WTC11 (cell line): ENCODE measurements at regions of chr13 and their contacts with region 1.

Region 1: DNA sequence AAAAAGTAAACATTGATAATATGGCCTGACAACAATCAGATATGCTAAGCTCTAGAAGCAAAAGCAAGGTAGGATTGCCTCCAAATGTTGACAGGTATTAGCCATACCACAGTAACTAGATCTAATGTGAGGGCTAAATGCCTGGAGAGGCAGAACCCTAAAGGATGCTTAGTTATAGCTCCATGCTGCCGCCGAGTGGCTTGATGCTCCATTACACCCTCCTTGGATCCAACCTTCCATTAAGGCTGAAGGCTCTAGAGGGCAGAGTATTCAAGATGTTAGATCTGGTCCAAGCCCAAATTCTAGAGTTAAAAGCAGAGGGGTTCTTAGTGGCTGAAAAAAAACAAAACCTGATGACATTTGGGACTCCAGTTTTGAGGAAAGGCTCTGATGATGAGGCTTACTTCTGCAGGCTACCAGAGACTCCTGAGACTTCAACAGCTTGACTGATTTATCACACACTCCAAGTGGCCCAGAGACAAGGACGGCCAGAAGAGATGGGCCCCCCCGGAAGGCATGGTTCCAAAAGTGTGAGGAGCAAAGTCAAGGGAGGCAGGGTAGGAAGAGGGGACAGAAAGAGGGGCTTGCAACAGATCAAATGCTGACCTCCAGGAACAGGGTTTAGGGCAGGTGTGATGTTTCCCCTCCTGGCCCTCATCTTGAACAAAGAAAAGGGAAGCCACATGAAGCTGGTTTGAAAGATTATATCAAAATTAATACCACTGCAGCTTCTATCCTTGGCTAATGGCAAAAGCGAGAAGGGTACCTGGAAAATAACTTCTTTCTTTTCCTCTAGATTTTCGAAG is 21.9 kb upstream of the CPB2 start:
- DNase-seq: peak; percentile 83
- ATAC-seq: peak; percentile 98
- H3K4me3 Mint-ChIP-seq: no peak overlapping the region
- H3K27ac Mint-ChIP-seq: peak overlapping the region; percentile 32; the same call in 1 of the 2 replicates
- H3K4me1 Mint-ChIP-seq: 0 out of 2 replicates have a peak, but pooled peaks cover 1% of the 10 kb centered on the region
- H3K27me3 Mint-ChIP-seq: no peaks in the 10 kb centered on the region
- CTCF ChIP-seq: peak; percentile 61; the same call in 1 of the 2 replicates

Region 2: GRCh38 chr13:45807520-45808099 is 319.1 kb before region 1 on chr13:
- CTCF ChIA-PET with region 1: interaction called, 13 read pairs
- POLR2A ChIA-PET with region 1: no interaction called
- DNase-seq: peak; percentile 40
- ATAC-seq: peak; percentile 88
- H3K4me3 Mint-ChIP-seq: no peak overlapping the region
- H3K27ac Mint-ChIP-seq: no peak overlapping the region
- H3K4me1 Mint-ChIP-seq: no peaks in the 10 kb centered on the region
- H3K27me3 Mint-ChIP-seq: no peaks in the 10 kb centered on the region; the same call in 1 of the 2 replicates
- CTCF ChIP-seq: no peak

Region 3: GRCh38 chr13:46041419-46041839 is 85.3 kb before region 1 on chr13:
- CTCF ChIA-PET with region 1: no interaction called
- POLR2A ChIA-PET with region 1: no interaction called
- DNase-seq: no peak
- ATAC-seq: no peak
- H3K4me3 Mint-ChIP-seq: no peak overlapping the region
- H3K27ac Mint-ChIP-seq: no peak overlapping the region
- H3K4me1 Mint-ChIP-seq: no peaks in the 10 kb centered on the region
- H3K27me3 Mint-ChIP-seq: no peaks in the 10 kb centered on the region
- CTCF ChIP-seq: no peak

Region 4: GRCh38 chr13:46071590-46072249 is 55.0 kb before region 1 on chr13:
- CTCF ChIA-PET with region 1: interaction called, 11 read pairs
- POLR2A ChIA-PET with region 1: no interaction called
- DNase-seq: peak; percentile 15
- ATAC-seq: peak; percentile 96
- H3K4me3 Mint-ChIP-seq: no peak overlapping the region
- H3K27ac Mint-ChIP-seq: no peak overlapping the region
- H3K4me1 Mint-ChIP-seq: no peaks in the 10 kb centered on the region
- H3K27me3 Mint-ChIP-seq: no peaks in the 10 kb centered on the region
- CTCF ChIP-seq: no peak

Region 5: GRCh38 chr13:46143184-46143701 is 16.5 kb after region 1 on chr13:
- CTCF ChIA-PET with region 1: interaction called, 16 read pairs
- POLR2A ChIA-PET with region 1: interaction called, 3 read pairs
- DNase-seq: no peak
- ATAC-seq: no peak
- H3K4me3 Mint-ChIP-seq: no peak overlapping the region
- H3K27ac Mint-ChIP-seq: no peak overlapping the region
- H3K4me1 Mint-ChIP-seq: peaks cover 43% of the 10 kb centered on the region
- H3K27me3 Mint-ChIP-seq: peaks cover 15% of the 10 kb centered on the region
- CTCF ChIP-seq: no peak

Region 6: GRCh38 chr13:46181840-46182490 is 55.2 kb after region 1 on chr13 and contains the start of gene LCP1:
- CTCF ChIA-PET with region 1: no interaction called
- POLR2A ChIA-PET with region 1: no interaction called
- DNase-seq: no peak
- ATAC-seq: no peak
- H3K4me3 Mint-ChIP-seq: no peak within 1 kb of the TSS
- H3K27ac Mint-ChIP-seq: no peak within 1 kb of the TSS
- H3K4me1 Mint-ChIP-seq: peaks cover 20% of the 10 kb centered on the region
- H3K27me3 Mint-ChIP-seq: no peaks in the 10 kb centered on the region
- CTCF ChIP-seq: no peak
- total RNA-seq, gene LCP1: 2.7 to 3.7 TPM (median 3.2 TPM) in 3 replicates

Region 7: GRCh38 chr13:46211483-46212351 is 85.0 kb after region 1 on chr13 and contains the start of gene LRRC63:
- CTCF ChIA-PET with region 1: no interaction called
- POLR2A ChIA-PET with region 1: no interaction called
- DNase-seq: peak; percentile 72
- ATAC-seq: peak; percentile 97
- H3K4me3 Mint-ChIP-seq: peak within 1 kb of the TSS; percentile 74
- H3K27ac Mint-ChIP-seq: no peak within 1 kb of the TSS
- H3K4me1 Mint-ChIP-seq: peaks cover 12% of the 10 kb centered on the region
- H3K27me3 Mint-ChIP-seq: peaks cover 25% of the 10 kb centered on the region
- CTCF ChIP-seq: no peak
- total RNA-seq, gene LRRC63: 0.11 TPM in 1 of 3 replicates, not detected in the others